ENCODE measurements at regions of chr20 and their contacts with region 1.

Region 1: GRCh38 chr20:31605031-31605901 is at the start of gene ID1:
- DNase-seq: peak; percentile 88 to 97 (median 96)
- H3K4me3 ChIP-seq: peak within 1 kb of the TSS; percentile 44 to 89 (median 76)
- H3K27ac ChIP-seq: peak within 1 kb of the TSS in 58 of 59 donors; percentile 42 to 95 (median 82)
- H3K27me3 ChIP-seq: no peaks in the 10 kb centered on the region
- CTCF ChIP-seq: peak in 32 of 56 donors; percentile 5 to 55 (median 22)
- total RNA-seq, gene ID1: 8.0 to 102 (median 36.9) TPM

Region 2: DNA sequence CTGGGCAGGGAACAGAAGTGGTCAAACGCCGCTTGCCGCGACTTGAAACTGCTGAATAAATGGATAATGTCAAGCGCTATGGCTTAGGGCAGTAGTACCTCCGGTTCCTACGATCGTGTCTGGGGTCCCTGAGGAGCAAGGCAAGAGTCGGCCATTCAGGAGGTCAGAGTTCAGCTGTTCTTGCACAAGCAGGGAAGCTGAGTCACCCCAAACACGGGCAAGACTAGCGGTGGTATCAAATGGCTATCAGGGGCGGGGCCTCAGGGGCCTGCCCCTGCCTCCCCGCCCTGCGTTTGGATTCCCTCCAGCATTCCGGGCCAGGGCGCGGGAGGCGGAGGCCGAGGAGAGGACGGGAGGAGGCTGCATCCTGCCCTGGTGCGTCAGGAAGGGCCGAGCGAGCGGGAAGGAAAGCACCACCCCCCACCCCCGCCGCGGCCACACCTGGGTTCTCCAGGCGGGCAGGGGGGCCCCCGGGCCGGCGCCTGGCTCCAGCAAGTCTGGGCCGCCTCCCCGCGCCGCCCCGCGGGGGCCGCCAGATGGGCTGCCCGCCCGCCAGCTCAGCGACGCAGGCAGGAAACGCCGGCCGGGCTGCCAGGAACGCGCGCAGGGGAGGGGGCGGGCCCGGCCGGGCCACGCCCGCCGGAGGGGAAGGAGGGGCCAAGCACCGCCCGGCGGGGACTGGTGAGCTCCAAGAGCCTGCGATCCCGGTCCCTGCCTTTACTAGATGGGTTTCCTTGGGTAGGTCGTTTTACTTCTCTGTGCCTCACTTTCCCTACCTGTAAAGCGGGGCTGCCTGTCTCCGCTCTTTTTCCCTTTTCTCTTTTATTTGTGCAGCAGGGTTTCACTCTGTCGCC is 32.3 kb before region 1 on chr20:
- intact Hi-C with region 1: loop called (anchors 1 to 2 kb)
- DNase-seq: peak; percentile 67 to 91 (median 84)
- H3K4me3 ChIP-seq: peak overlapping the region; percentile 21 to 76 (median 63)
- H3K27ac ChIP-seq: peak overlapping the region; percentile 78 to 99 (median 94)
- H3K27me3 ChIP-seq: no peaks in the 10 kb centered on the region
- CTCF ChIP-seq: peak in 16 of 56 donors; percentile 0 to 55 (median 18)

Region 3: GRCh38 chr20:31691646-31692275 is 86.5 kb after region 1 on chr20:
- intact Hi-C with region 1: no loop called
- DNase-seq: no peak
- H3K4me3 ChIP-seq: peak overlapping the region in 2 of 59 donors; percentile 3 to 7
- H3K27ac ChIP-seq: peak overlapping the region in 51 of 59 donors; percentile 11 to 100 (median 67)
- H3K27me3 ChIP-seq: no peaks in the 10 kb centered on the region
- CTCF ChIP-seq: no peak